ENCODE measurements at regions of chr12 and their contacts with region 1.

Region 1: GRCh38 chr12:46268590-46269558 is at the start of gene SLC38A1:
- DNase-seq: peak; percentile 83 to 90
- ATAC-seq: peak; percentile 84 to 89 (median 86)
- H3K4me3 ChIP-seq: peak within 1 kb of the TSS; percentile 75
- H3K27ac ChIP-seq: peak within 1 kb of the TSS; percentile 78
- H3K4me1 ChIP-seq: peaks cover 8% of the 10 kb centered on the region
- H3K27me3 ChIP-seq: peaks cover 0 to 10% (median 0%) of the 10 kb centered on the region in 3 donors
- CTCF ChIP-seq: no peak
- total RNA-seq, gene SLC38A1: 17.3 to 58.8 (median 31.3) TPM

Region 2: GRCh38 chr12:46219884-46220655 is 48.8 kb before region 1 on chr12:
- intact Hi-C with region 1: loop called in 1 of 2 experiments (anchors 5 kb)
- DNase-seq: no peak
- ATAC-seq: no peak
- H3K4me3 ChIP-seq: no peak overlapping the region
- H3K27ac ChIP-seq: no peak overlapping the region
- H3K4me1 ChIP-seq: peaks cover 20% of the 10 kb centered on the region
- H3K27me3 ChIP-seq: no peaks in the 10 kb centered on the region
- CTCF ChIP-seq: no peak

Measured in psoas muscle (tissue), 8 donors.